Activated CD4-positive, alpha-beta T cell treated with anti-CD3 and anti-CD28 coated beads for 36 hours (primary cell): ENCODE measurements at regions of chr2 and their contacts with region 1.

Region 1: DNA sequence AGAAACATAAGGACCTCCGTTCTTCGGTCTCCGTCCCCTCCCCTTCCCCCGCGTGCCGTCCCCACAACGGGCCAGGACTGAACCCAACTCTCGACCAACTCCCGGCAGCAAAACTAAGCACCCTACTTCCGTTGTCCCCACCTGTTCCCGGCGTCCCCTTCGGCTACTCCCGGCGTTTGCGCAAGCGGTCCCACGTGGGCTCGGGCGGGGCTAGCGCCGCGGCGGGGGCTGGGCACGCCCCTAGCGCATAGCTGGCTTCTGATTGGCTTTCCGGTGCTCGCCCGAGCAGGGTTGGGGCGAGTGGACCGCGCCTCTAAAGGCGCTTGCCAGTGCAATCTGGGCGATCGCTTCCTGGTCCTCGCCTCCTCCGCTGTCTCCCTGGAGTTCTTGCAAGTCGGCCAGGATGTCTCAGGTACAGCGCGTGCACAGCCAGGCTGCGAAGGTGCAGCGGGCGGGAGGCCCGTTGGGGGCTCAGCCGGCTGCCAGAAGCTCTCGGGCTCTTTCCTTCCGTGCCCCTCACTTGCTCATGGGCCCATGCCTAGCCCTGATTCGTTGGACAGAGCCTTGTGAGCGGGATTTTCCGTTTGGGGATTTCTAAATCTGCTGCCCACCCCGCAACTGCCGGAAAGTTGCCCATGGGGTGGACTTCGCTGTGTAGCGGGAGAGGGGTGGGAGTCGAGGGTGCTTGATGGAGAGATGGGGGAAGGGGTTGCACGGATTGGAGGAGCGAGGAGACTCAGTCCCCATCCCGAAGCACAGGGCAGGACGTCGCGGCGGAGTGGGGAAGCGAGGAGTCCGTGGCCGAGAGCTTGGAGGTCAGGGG is at the starts of genes C2orf76 and DBI:
- DNase-seq: peak; percentile 96
- ATAC-seq: peak; percentile 95
- H3K4me3 Mint-ChIP-seq: peak within 1 kb of the TSS; percentile 92
- H3K27ac Mint-ChIP-seq: peak within 1 kb of the TSS; percentile 95
- H3K4me1 Mint-ChIP-seq: peaks cover 36% of the 10 kb centered on the region
- H3K27me3 Mint-ChIP-seq: no peaks in the 10 kb centered on the region
- total RNA-seq, gene C2orf76: 8.9 to 9.9 TPM
- total RNA-seq, gene DBI: 123 to 151 TPM

Region 2: DNA sequence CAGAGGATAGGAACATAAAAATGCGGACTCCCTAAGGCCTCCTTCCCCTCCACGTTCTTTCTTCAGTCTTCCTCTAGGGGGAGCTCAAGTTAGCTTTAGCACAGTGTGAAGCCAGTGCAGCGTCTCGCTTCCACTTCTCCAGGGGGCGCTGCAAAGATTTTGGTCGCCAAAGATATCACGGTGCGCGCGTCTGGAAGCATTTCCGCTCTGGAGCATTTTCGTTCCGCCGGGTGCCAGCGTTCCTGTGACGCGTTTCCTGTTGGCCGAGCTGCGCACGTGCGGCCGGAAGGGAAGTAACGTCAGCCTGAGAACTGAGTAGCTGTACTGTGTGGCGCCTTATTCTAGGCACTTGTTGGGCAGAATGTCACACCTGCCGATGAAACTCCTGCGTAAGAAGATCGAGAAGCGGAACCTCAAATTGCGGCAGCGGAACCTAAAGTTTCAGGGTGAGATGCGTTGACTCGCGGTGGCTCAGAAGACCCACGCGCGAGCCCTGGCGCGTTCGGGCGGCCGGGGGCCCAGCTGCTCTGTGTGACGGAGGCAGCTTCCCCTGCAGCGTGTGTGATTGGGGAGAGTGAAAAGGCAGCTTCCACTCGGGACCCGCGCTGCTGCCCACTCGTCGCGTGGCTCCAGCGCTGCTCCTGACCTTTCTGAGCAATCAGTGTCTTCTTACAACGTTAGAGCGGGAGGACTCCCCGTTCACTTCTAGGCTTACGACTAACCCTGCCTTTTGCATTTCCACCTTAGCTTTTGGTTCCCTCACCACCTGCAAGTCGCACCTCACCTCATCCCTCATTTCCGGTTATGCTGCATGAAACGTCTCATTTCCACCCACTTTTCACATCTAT is 1552.2 kb before region 1 on chr2 and contains the start of gene DDX18:
- CTCF ChIA-PET with region 1: no interaction called
- POLR2A ChIA-PET with region 1: no interaction called
- intact Hi-C with region 1: loop called in 1 of 2 experiments (anchors 2 kb)
- DNase-seq: peak; percentile 98
- ATAC-seq: peak; percentile 91
- H3K4me3 Mint-ChIP-seq: peak within 1 kb of the TSS; percentile 96
- H3K27ac Mint-ChIP-seq: peak within 1 kb of the TSS; percentile 99
- H3K4me1 Mint-ChIP-seq: peaks cover 41% of the 10 kb centered on the region
- H3K27me3 Mint-ChIP-seq: no peaks in the 10 kb centered on the region
- total RNA-seq, gene DDX18: 161 to 180 TPM

Region 3: GRCh38 chr2:117825437-117825836 is 1541.4 kb before region 1 on chr2:
- CTCF ChIA-PET with region 1: no interaction called
- POLR2A ChIA-PET with region 1: no interaction called
- intact Hi-C with region 1: no loop called
- DNase-seq: no peak
- ATAC-seq: no peak
- H3K4me3 Mint-ChIP-seq: no peak overlapping the region
- H3K27ac Mint-ChIP-seq: no peak overlapping the region
- H3K4me1 Mint-ChIP-seq: peaks cover 9% of the 10 kb centered on the region
- H3K27me3 Mint-ChIP-seq: no peaks in the 10 kb centered on the region

Region 4: GRCh38 chr2:118186110-118186857 is 1180.6 kb before region 1 on chr2:
- CTCF ChIA-PET with region 1: no interaction called
- POLR2A ChIA-PET with region 1: no interaction called
- intact Hi-C with region 1: loop called (anchors 1 to 5 kb)
- DNase-seq: peak; percentile 94
- ATAC-seq: peak; percentile 91
- H3K4me3 Mint-ChIP-seq: peak overlapping the region; percentile 87
- H3K27ac Mint-ChIP-seq: peak overlapping the region; percentile 98
- H3K4me1 Mint-ChIP-seq: peaks cover 14% of the 10 kb centered on the region
- H3K27me3 Mint-ChIP-seq: no peaks in the 10 kb centered on the region

Region 5: GRCh38 chr2:119678998-119679710 is 312.3 kb after region 1 on chr2 and contains the start of gene TMEM177:
- CTCF ChIA-PET with region 1: no interaction called
- POLR2A ChIA-PET with region 1: interaction called, 3 read pairs
- intact Hi-C with region 1: loop called in 1 of 2 experiments (anchors 1 kb)
- DNase-seq: peak; percentile 94
- ATAC-seq: peak; percentile 93
- H3K4me3 Mint-ChIP-seq: peak within 1 kb of the TSS; percentile 87
- H3K27ac Mint-ChIP-seq: peak within 1 kb of the TSS; percentile 88
- H3K4me1 Mint-ChIP-seq: peaks cover 33% of the 10 kb centered on the region
- H3K27me3 Mint-ChIP-seq: no peaks in the 10 kb centered on the region
- total RNA-seq, gene TMEM177: 13.6 to 15.8 TPM

Region 6: GRCh38 chr2:119766944-119767343 is 400.1 kb after region 1 on chr2:
- CTCF ChIA-PET with region 1: no interaction called
- POLR2A ChIA-PET with region 1: no interaction called
- intact Hi-C with region 1: no loop called
- DNase-seq: no peak
- ATAC-seq: no peak
- H3K4me3 Mint-ChIP-seq: no peak overlapping the region
- H3K27ac Mint-ChIP-seq: no peak overlapping the region
- H3K4me1 Mint-ChIP-seq: peaks cover 43% of the 10 kb centered on the region
- H3K27me3 Mint-ChIP-seq: no peaks in the 10 kb centered on the region

Region 7: DNA sequence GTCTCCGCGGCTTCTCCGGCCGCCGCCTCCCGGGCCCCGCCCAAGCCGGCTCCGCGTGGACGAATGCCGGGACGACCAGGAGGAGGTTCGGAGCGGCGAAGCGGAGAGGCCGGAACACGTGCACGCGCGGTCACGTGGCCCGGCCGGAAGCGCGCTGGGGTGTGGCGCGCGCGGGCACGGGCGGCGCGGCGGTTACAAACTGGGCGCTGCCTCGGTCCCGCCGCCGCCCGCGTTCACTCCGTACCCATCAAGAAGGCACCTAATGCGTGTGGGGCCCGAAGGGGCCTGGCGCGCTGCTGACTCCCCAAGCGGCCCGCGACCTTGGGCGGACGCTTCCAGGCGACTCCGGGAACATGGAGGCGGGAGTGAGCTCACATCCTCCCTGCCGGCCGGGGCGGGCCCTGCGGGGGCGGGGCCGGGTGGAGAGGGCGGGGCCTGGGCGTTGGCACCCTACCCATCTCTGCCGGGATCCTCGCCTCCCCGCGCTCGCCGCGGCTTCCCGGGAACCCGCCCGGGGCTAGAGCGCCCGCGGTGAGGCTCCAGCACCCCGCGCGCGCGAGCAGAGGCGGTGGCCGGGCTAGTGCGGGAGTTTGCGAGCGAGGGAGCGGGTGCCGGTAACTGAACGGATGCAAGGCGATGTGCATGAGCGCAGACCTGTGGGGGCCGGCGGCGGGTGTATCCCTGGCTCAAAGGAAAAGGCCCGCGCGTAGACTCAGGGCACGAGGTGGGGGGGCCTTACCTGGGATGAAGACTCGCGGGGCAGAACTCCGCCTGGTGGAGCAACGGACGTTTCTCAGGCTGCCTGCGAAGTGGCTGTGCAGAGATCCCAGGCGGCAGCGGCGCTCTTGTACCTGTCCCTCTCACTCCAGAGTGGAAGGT is 856.4 kb after region 1 on chr2 and contains the start of gene TMEM185B:
- CTCF ChIA-PET with region 1: no interaction called
- POLR2A ChIA-PET with region 1: no interaction called
- intact Hi-C with region 1: loop called in 1 of 2 experiments (anchors 2 kb)
- DNase-seq: peak; percentile 95
- ATAC-seq: peak; percentile 90
- H3K4me3 Mint-ChIP-seq: peak within 1 kb of the TSS; percentile 76
- H3K27ac Mint-ChIP-seq: peak within 1 kb of the TSS; percentile 93
- H3K4me1 Mint-ChIP-seq: peaks cover 50% of the 10 kb centered on the region
- H3K27me3 Mint-ChIP-seq: no peaks in the 10 kb centered on the region
- total RNA-seq, gene TMEM185B: 15.9 to 17.3 TPM